ENCODE measurements at regions of chr9 and their contacts with region 1.

Region 1: DNA sequence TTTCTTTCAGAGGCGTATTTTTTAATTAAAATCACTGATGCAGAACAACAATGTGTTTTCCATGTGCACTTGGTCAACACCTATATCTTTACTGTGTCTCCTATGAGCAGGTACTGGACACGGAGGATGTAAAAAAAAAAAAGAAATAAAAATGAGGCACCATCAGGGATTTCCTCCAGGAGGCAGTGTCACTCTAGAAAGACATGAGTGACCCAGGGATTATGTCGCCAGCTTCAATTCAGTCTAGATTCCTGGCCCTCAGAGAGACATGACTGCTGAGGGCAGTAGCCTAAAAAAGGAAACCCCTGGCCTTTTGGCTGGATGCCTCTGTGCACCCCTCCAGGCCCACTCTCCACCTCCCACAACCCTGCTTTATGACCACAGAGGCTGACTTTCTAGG is 18.3 kb upstream of the IL33 start:
- DNase-seq: peak; percentile 67
- H3K4me3 ChIP-seq: no peak overlapping the region
- H3K27ac ChIP-seq: no peak overlapping the region
- H3K4me1 ChIP-seq: peaks cover 18% of the 10 kb centered on the region
- H3K27me3 ChIP-seq: no peaks in the 10 kb centered on the region
- CTCF ChIP-seq: peak; percentile 29 to 42
- POLR2A ChIP-seq: no peak

Region 2: GRCh38 chr9:5643005-5643624 is 554.2 kb before region 1 on chr9:
- CTCF ChIA-PET with region 1: no interaction called
- POLR2A ChIA-PET with region 1: no interaction called
- dilution Hi-C with region 1: no loop called
- intact Hi-C with region 1: no loop called
- DNase-seq: no peak
- H3K4me3 ChIP-seq: no peak overlapping the region
- H3K27ac ChIP-seq: no peak overlapping the region
- H3K4me1 ChIP-seq: no peaks in the 10 kb centered on the region
- H3K27me3 ChIP-seq: no peaks in the 10 kb centered on the region
- CTCF ChIP-seq: no peak
- POLR2A ChIP-seq: no peak

Region 3: GRCh38 chr9:6024020-6024554 is 173.2 kb before region 1 on chr9:
- CTCF ChIA-PET with region 1: no interaction called
- POLR2A ChIA-PET with region 1: no interaction called
- dilution Hi-C with region 1: no loop called
- intact Hi-C with region 1: no loop called
- DNase-seq: peak; percentile 22
- H3K4me3 ChIP-seq: peak overlapping the region in 1 of 3 experiments; percentile 11
- H3K27ac ChIP-seq: no peak overlapping the region
- H3K4me1 ChIP-seq: no peaks in the 10 kb centered on the region
- H3K27me3 ChIP-seq: peaks cover 1 to 13% of the 10 kb centered on the region in 2 experiments
- CTCF ChIP-seq: peak; percentile 46 to 48
- POLR2A ChIP-seq: no peak

Region 4: DNA sequence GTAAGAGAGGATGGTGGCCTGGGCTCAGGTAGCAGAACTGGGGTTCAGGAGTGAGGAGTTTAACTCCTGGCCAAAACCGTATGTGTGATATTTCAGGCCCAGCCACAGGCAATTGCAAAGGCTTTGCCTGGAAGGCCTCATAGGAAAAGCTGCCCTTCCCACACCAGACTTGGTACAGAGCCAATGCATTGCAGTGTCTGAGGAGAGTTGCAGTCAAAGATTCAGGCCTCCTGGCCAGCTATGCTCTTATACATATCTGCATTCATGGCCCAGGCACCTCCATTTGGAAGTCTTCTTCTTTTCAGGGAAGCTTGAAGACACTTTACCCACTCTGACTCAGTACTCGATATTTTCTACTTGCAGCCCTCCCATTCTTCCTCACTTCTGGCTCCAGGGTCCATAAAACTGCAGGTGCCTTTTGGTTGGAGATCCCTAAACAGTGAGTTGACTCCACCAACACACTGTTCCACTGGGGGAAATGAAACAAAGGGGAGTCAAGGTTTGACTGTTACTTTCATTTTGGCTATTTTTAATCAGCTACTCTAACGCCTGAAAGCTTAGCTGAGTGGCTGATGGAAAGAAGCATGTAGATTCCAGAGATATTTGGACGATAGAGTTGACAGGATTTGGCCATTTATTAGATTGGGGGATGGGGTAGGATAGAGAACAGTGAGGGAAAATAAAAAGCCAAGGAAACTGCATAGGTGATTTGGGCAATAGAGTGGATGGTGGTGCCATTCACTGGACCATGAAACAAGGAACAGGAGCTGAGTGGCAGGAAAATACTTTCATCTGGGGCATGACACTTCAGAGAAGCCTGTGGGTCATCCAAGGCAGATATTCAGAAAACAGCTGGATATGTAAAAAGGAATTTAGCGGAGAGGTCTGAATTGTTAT is 12.3 kb before region 1 on chr9:
- CTCF ChIA-PET with region 1: interaction called, 27 read pairs
- POLR2A ChIA-PET with region 1: no interaction called
- dilution Hi-C with region 1: no loop called
- intact Hi-C with region 1: no loop called
- DNase-seq: peak; percentile 63
- H3K4me3 ChIP-seq: no peak overlapping the region
- H3K27ac ChIP-seq: no peak overlapping the region
- H3K4me1 ChIP-seq: peaks cover 15% of the 10 kb centered on the region
- H3K27me3 ChIP-seq: no peaks in the 10 kb centered on the region
- CTCF ChIP-seq: no peak
- POLR2A ChIP-seq: no peak

Region 5: GRCh38 chr9:6215562-6215961 is 18.2 kb after region 1 on chr9 and contains the start of gene IL33:
- CTCF ChIA-PET with region 1: interaction called, 21 read pairs
- POLR2A ChIA-PET with region 1: no interaction called
- dilution Hi-C with region 1: no loop called
- intact Hi-C with region 1: loop called (anchors 1 kb)
- DNase-seq: peak; percentile 72
- H3K4me3 ChIP-seq: peak within 1 kb of the TSS in 1 of 3 experiments; percentile 42
- H3K27ac ChIP-seq: no peak within 1 kb of the TSS
- H3K4me1 ChIP-seq: peaks cover 32% of the 10 kb centered on the region
- H3K27me3 ChIP-seq: no peaks in the 10 kb centered on the region
- CTCF ChIP-seq: no peak
- POLR2A ChIP-seq: no peak
- total RNA-seq, gene IL33: 8.5 and 13.8 TPM in 2 replicates

Region 6: DNA sequence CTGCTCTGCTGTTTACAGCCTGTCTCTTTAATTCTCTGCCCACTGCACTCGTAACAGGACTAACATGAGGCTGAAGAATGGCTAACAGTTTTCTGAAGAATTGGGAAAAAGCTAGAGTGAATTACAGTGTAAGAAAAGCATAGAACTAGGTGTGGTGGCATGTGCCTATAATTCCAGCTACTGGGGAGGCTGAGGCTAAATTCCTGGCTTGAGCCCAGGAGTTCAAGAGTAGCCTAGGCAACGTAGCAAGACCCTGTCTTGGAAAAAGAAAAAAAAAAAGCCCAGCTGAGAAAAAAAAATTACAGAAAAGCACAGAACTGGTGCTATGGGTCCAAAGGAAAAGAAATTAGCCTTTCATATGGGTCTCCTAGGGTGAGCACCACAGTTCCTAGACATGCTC is 201.7 kb after region 1 on chr9:
- CTCF ChIA-PET with region 1: no interaction called
- POLR2A ChIA-PET with region 1: no interaction called
- dilution Hi-C with region 1: no loop called
- intact Hi-C with region 1: no loop called
- DNase-seq: no peak
- H3K4me3 ChIP-seq: no peak overlapping the region
- H3K27ac ChIP-seq: no peak overlapping the region
- H3K4me1 ChIP-seq: no peaks in the 10 kb centered on the region
- H3K27me3 ChIP-seq: no peaks in the 10 kb centered on the region
- CTCF ChIP-seq: no peak
- POLR2A ChIP-seq: no peak

Region 7: DNA sequence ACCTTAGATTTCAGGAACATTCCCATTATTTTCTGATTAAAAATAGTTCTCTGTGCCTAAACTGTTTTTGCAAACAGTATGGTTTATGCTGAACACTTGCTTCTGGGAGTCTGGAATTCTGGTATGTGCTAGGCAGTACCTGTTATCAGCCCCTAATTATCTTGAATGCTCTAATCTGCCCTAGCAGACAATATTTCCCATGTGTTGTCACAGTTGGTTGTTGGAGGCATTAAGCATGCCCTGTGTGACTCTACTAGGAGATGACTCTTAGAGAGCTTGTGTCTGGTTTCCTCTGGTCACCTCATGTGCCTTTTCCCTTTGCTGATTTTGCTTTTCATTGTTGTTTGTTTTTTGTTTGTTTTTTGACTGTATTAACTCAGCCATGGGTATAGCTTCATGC is 252.3 kb after region 1 on chr9:
- CTCF ChIA-PET with region 1: no interaction called
- POLR2A ChIA-PET with region 1: no interaction called
- dilution Hi-C with region 1: no loop called
- intact Hi-C with region 1: no loop called
- DNase-seq: peak; percentile 42
- H3K4me3 ChIP-seq: no peak overlapping the region
- H3K27ac ChIP-seq: peak overlapping the region; percentile 66
- H3K4me1 ChIP-seq: peaks cover 38% of the 10 kb centered on the region
- H3K27me3 ChIP-seq: no peaks in the 10 kb centered on the region
- CTCF ChIP-seq: no peak
- POLR2A ChIP-seq: no peak